GM12878 (cell line): ENCODE measurements at regions of chr12 and their contacts with region 1.

Region 1: GRCh38 chr12:94875525-94875924 is 128.0 kb downstream of the NDUFA12 start:
- DNase-seq: peak; percentile 86
- ATAC-seq: peak; percentile 55
- H3K4me3 ChIP-seq: peak overlapping the region; percentile 91; the same call in 1 of the 2 replicates
- H3K27ac ChIP-seq: no peak overlapping the region
- H3K4me1 ChIP-seq: peaks cover 9% of the 10 kb centered on the region
- H3K27me3 ChIP-seq: no peaks in the 10 kb centered on the region
- CTCF ChIP-seq: peak; percentile 57 to 83 (median 68); a peak in 4 of 6 replicates
- EP300 ChIP-seq: no peak
- POLR2A ChIP-seq: no peak
- RAD21 ChIP-seq: peak; percentile 98

Region 2: GRCh38 chr12:94538318-94538717 is 337.2 kb before region 1 on chr12:
- CTCF ChIA-PET with region 1: interaction called, 16 read pairs
- POLR2A ChIA-PET with region 1: no interaction called
- RAD21 ChIA-PET with region 1: interaction called, 14 read pairs
- SMC1A ChIA-PET with region 1: interaction called, 12 read pairs
- in situ Hi-C with region 1: no loop called
- intact Hi-C with region 1: no loop called
- DNase-seq: no peak
- ATAC-seq: no peak
- H3K4me3 ChIP-seq: no peak overlapping the region
- H3K27ac ChIP-seq: no peak overlapping the region
- H3K4me1 ChIP-seq: no peaks in the 10 kb centered on the region
- H3K27me3 ChIP-seq: no peaks in the 10 kb centered on the region; a peak in 1 of 4 replicates
- CTCF ChIP-seq: no peak
- EP300 ChIP-seq: no peak
- POLR2A ChIP-seq: no peak
- RAD21 ChIP-seq: no peak

Region 3: GRCh38 chr12:94621664-94622359 is 253.7 kb before region 1 on chr12:
- CTCF ChIA-PET with region 1: interaction called, 23 read pairs
- POLR2A ChIA-PET with region 1: interaction called, 4 read pairs
- RAD21 ChIA-PET with region 1: interaction called, 46 read pairs
- SMC1A ChIA-PET with region 1: interaction called, 16 read pairs
- in situ Hi-C with region 1: no loop called
- intact Hi-C with region 1: no loop called
- DNase-seq: peak; percentile 87
- ATAC-seq: peak; percentile 98
- H3K4me3 ChIP-seq: peak overlapping the region; percentile 47; the same call in 1 of the 2 replicates
- H3K27ac ChIP-seq: peak overlapping the region; percentile 85
- H3K4me1 ChIP-seq: peaks cover 16% of the 10 kb centered on the region
- H3K27me3 ChIP-seq: no peaks in the 10 kb centered on the region
- CTCF ChIP-seq: no peak
- EP300 ChIP-seq: peak; percentile 68 to 79; a peak in 2 of 4 replicates
- POLR2A ChIP-seq: no peak
- RAD21 ChIP-seq: no peak

Region 4: GRCh38 chr12:94710933-94711332 is 164.6 kb before region 1 on chr12:
- CTCF ChIA-PET with region 1: interaction called, 30 read pairs
- POLR2A ChIA-PET with region 1: no interaction called
- RAD21 ChIA-PET with region 1: interaction called, 73 read pairs
- SMC1A ChIA-PET with region 1: interaction called, 44 read pairs
- in situ Hi-C with region 1: no loop called
- intact Hi-C with region 1: loop called (anchors 1 kb)
- DNase-seq: no peak
- ATAC-seq: peak; percentile 77
- H3K4me3 ChIP-seq: no peak overlapping the region
- H3K27ac ChIP-seq: no peak overlapping the region
- H3K4me1 ChIP-seq: peaks cover 7% of the 10 kb centered on the region
- H3K27me3 ChIP-seq: no peaks in the 10 kb centered on the region
- CTCF ChIP-seq: peak; percentile 48 to 55 (median 52); a peak in 5 of 6 replicates
- EP300 ChIP-seq: no peak
- POLR2A ChIP-seq: no peak
- RAD21 ChIP-seq: peak; percentile 54

Region 5: DNA sequence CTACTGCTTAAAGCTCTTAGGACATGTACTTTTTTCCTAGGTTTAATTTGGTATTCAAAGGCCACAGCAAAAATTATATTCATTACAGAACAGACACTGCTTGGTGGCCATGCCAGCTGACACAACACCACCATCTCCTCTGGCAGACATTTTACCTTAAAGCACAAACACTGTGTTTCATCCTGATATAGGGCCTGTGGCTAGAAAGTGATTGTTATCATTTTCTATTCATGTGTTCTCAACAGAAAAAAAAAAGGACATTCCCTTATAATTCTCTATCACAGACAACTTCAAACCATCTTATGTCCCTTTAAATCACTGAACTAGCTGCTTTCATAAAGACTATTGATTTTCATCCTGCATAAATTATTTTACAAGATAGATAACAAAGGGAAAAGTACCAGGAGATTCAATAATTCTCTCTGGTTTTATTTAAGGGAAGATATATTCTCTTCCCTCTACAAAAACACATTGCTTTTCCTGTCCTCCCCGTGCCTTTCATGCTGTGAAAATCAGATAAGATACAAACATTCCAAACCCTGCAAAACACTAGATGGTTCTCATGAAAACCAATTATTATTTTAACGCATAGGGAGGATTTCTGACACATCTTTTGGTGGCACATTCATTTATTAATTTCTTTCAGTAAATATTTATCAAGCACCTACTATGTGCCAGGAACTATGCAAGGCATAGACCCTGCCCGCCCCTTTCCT is 85.9 kb before region 1 on chr12:
- CTCF ChIA-PET with region 1: interaction called, 8 read pairs
- POLR2A ChIA-PET with region 1: no interaction called
- RAD21 ChIA-PET with region 1: interaction called, 10 read pairs
- SMC1A ChIA-PET with region 1: interaction called, 12 read pairs
- in situ Hi-C with region 1: no loop called
- intact Hi-C with region 1: no loop called
- DNase-seq: no peak
- ATAC-seq: no peak
- H3K4me3 ChIP-seq: no peak overlapping the region
- H3K27ac ChIP-seq: no peak overlapping the region
- H3K4me1 ChIP-seq: peaks cover 16% of the 10 kb centered on the region
- H3K27me3 ChIP-seq: no peaks in the 10 kb centered on the region
- CTCF ChIP-seq: no peak
- EP300 ChIP-seq: no peak
- POLR2A ChIP-seq: no peak
- RAD21 ChIP-seq: no peak

Region 6: DNA sequence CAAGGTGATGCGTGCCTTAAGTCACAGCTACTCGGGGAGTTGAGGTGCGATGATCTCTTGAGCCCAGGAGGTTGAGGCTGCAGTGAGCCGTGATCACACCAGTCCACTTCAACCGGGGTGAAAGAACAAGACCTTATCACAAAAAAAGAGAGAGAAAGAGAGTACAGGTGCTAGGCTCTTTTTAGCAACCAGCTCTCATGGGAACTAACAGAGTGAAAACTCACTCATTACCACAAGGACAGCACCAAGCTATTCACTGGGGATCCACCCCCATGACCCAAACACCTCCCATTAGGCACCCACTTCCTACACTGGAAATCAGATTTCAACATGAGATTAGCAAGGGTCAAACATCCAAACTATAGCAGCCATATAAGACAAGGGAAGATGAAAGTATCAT is 36.2 kb before region 1 on chr12:
- CTCF ChIA-PET with region 1: interaction called, 13 read pairs
- POLR2A ChIA-PET with region 1: interaction called, 7 read pairs
- RAD21 ChIA-PET with region 1: interaction called, 51 read pairs
- SMC1A ChIA-PET with region 1: interaction called, 82 read pairs
- in situ Hi-C with region 1: no loop called
- intact Hi-C with region 1: no loop called
- DNase-seq: peak; percentile 82
- ATAC-seq: peak; percentile 83
- H3K4me3 ChIP-seq: no peak overlapping the region
- H3K27ac ChIP-seq: peak overlapping the region; percentile 79
- H3K4me1 ChIP-seq: peaks cover 26% of the 10 kb centered on the region
- H3K27me3 ChIP-seq: no peaks in the 10 kb centered on the region
- CTCF ChIP-seq: no peak
- EP300 ChIP-seq: peak; percentile 52 to 75; a peak in 2 of 4 replicates
- POLR2A ChIP-seq: no peak
- RAD21 ChIP-seq: no peak

Region 7: DNA sequence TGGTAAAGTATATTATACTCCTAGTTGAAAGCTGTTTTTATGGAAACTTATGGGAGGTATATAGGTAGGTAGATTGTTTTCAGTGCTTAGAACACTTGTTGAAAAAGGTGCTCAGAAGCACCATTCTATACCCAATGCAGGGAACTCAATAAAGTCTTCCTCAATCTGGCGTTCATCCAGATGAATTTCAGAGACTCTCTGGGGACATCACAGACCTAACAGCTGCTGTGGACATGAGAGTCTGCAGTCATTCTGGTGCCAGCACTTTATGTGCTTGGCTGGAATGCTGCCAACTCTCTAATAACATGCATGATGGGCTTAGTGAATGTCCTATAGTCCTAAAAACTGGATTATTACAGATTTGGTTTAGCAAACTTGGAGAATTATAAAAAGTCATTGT is 799.1 kb after region 1 on chr12:
- CTCF ChIA-PET with region 1: no interaction called
- POLR2A ChIA-PET with region 1: no interaction called
- RAD21 ChIA-PET with region 1: no interaction called
- SMC1A ChIA-PET with region 1: no interaction called
- in situ Hi-C with region 1: no loop called
- intact Hi-C with region 1: no loop called
- DNase-seq: no peak
- ATAC-seq: no peak
- H3K4me3 ChIP-seq: no peak overlapping the region
- H3K27ac ChIP-seq: no peak overlapping the region
- H3K4me1 ChIP-seq: no peaks in the 10 kb centered on the region
- H3K27me3 ChIP-seq: no peaks in the 10 kb centered on the region
- CTCF ChIP-seq: no peak
- EP300 ChIP-seq: no peak
- POLR2A ChIP-seq: no peak
- RAD21 ChIP-seq: no peak